B cell (primary cell): ENCODE measurements at regions of chr12 and their contacts with region 1.

Region 1: DNA sequence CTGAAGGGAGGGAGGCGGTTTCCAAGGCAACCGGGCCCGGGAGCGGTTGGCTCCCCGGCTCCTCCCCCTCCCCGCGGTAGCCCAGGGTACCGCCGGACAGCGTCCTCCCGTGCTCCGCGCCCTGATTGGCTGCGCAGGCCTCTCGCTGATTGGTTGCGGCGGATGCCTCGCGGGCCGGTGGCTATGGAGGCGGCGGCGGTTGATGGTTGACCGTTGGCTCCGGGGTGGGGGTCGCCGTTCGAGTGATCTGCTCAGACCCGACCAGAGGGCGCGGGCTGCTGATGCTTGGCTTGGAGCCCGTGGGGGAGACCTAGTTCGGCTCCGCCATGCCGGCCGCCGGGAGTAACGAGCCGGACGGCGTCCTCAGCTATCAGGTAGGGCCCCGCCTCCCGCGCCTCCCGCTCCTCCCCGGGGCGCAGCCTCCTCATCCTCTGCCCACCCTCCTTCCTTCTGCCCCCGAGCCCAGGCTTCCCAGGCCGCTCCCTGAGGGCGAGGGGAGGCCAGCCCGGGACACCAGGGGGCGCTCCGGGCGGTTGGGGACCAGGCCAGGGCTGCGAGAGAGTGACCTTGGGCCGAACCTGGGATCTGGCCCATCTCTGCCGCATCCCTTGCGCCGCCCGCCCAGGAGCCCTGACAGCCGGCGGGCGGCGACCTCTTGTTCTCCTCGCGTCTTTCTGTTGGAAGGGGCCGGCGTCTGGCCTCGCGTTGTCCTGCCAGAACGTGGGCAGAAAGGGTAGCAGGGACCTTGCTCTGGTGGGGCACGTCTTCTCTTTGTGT is at the start of gene SLC4A8:
- DNase-seq: peak; percentile 87
- ATAC-seq: peak; percentile 94
- H3K4me3 ChIP-seq: peak within 1 kb of the TSS in 4 of 5 experiments; percentile 62 to 76 (median 68)
- H3K4me3 Mint-ChIP-seq: peak within 1 kb of the TSS; percentile 68
- H3K27ac ChIP-seq: peak within 1 kb of the TSS in 1 of 2 donors; percentile 23
- H3K27ac Mint-ChIP-seq: peak within 1 kb of the TSS; percentile 50
- H3K4me1 ChIP-seq: peaks cover 15 to 19% of the 10 kb centered on the region in 2 donors
- H3K4me1 Mint-ChIP-seq: peaks cover 22% of the 10 kb centered on the region
- H3K27me3 ChIP-seq: no peaks in the 10 kb centered on the region
- H3K27me3 Mint-ChIP-seq: no peaks in the 10 kb centered on the region
- CTCF ChIP-seq: peak; percentile 86
- total RNA-seq, gene SLC4A8: 3.0 and 3.2 TPM in 2 replicates

Region 2: GRCh38 chr12:51217968-51218606 is 206.8 kb before region 1 on chr12 and contains the start of gene POU6F1:
- CTCF ChIA-PET with region 1: no interaction called
- POLR2A ChIA-PET with region 1: no interaction called
- intact Hi-C with region 1: no loop called
- DNase-seq: peak; percentile 87
- ATAC-seq: peak; percentile 72
- H3K4me3 ChIP-seq: peak within 1 kb of the TSS; percentile 68 to 86 (median 71)
- H3K4me3 Mint-ChIP-seq: peak within 1 kb of the TSS; percentile 95
- H3K27ac ChIP-seq: peak within 1 kb of the TSS; percentile 85 to 93
- H3K27ac Mint-ChIP-seq: peak within 1 kb of the TSS; percentile 96
- H3K4me1 ChIP-seq: peaks cover 6 to 18% of the 10 kb centered on the region in 2 donors
- H3K4me1 Mint-ChIP-seq: peaks cover 19% of the 10 kb centered on the region
- H3K27me3 ChIP-seq: no peaks in the 10 kb centered on the region
- H3K27me3 Mint-ChIP-seq: no peaks in the 10 kb centered on the region
- CTCF ChIP-seq: peak; percentile 69
- total RNA-seq, gene POU6F1: 57.5 and 62.6 TPM in 2 replicates

Region 3: GRCh38 chr12:51391283-51392162 is 33.3 kb before region 1 on chr12 and contains the start of gene GALNT6:
- CTCF ChIA-PET with region 1: interaction called, 5 read pairs
- POLR2A ChIA-PET with region 1: no interaction called
- intact Hi-C with region 1: loop called (anchors 1 kb)
- DNase-seq: peak; percentile 88
- ATAC-seq: peak; percentile 79
- H3K4me3 ChIP-seq: peak within 1 kb of the TSS; percentile 55 to 87 (median 83)
- H3K4me3 Mint-ChIP-seq: peak within 1 kb of the TSS; percentile 90
- H3K27ac ChIP-seq: peak within 1 kb of the TSS; percentile 68 to 87
- H3K27ac Mint-ChIP-seq: peak within 1 kb of the TSS; percentile 88
- H3K4me1 ChIP-seq: peaks cover 68 to 79% of the 10 kb centered on the region in 2 donors
- H3K4me1 Mint-ChIP-seq: peaks cover 74% of the 10 kb centered on the region
- H3K27me3 ChIP-seq: no peaks in the 10 kb centered on the region
- H3K27me3 Mint-ChIP-seq: no peaks in the 10 kb centered on the region
- CTCF ChIP-seq: no peak
- total RNA-seq, gene GALNT6: 8.5 and 9.0 TPM in 2 replicates

Region 4: DNA sequence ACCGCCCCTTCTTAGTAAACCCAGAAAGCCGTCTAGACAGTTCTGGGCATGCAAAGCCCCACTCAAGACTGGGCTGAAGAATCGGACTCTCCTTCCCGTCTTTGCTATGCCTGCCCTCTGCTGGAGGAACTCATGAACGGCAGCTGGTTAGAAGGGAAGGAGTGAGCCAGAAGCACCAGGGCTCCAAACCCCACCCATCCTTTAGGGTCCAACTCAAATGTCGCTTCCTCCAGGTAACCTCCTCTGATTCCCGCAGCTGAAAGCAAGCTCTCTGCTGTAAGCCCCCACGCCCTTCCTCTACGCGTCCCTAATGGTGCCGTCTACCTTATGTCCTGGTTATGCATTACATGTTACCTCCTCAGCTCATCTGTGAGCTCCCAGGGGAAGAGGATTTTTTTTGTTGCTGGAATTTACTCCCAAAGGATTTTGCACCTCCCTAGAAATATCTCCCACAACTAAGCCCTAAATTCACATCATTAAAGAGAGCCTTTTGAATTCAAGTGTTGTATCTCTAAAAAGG is 107.2 kb after region 1 on chr12:
- CTCF ChIA-PET with region 1: interaction called, 83 read pairs
- POLR2A ChIA-PET with region 1: no interaction called
- intact Hi-C with region 1: no loop called
- DNase-seq: peak; percentile 84
- ATAC-seq: peak; percentile 98
- H3K4me3 ChIP-seq: no peak overlapping the region
- H3K4me3 Mint-ChIP-seq: no peak overlapping the region
- H3K27ac ChIP-seq: no peak overlapping the region
- H3K27ac Mint-ChIP-seq: no peak overlapping the region
- H3K4me1 ChIP-seq: peaks cover 7 to 8% of the 10 kb centered on the region in 2 donors
- H3K4me1 Mint-ChIP-seq: peaks cover 9% of the 10 kb centered on the region
- H3K27me3 ChIP-seq: peaks cover 0 to 13% (median 0%) of the 10 kb centered on the region in 4 experiments
- H3K27me3 Mint-ChIP-seq: peaks cover 30% of the 10 kb centered on the region
- CTCF ChIP-seq: peak; percentile 92

Region 5: GRCh38 chr12:51678086-51678724 is 253.4 kb after region 1 on chr12:
- CTCF ChIA-PET with region 1: interaction called, 5 read pairs
- POLR2A ChIA-PET with region 1: no interaction called
- intact Hi-C with region 1: loop called (anchors 2 kb)
- DNase-seq: peak; percentile 35
- ATAC-seq: peak; percentile 31
- H3K4me3 ChIP-seq: no peak overlapping the region
- H3K4me3 Mint-ChIP-seq: no peak overlapping the region
- H3K27ac ChIP-seq: no peak overlapping the region
- H3K27ac Mint-ChIP-seq: no peak overlapping the region
- H3K4me1 ChIP-seq: no peaks in the 10 kb centered on the region
- H3K4me1 Mint-ChIP-seq: no peaks in the 10 kb centered on the region
- H3K27me3 ChIP-seq: no peaks in the 10 kb centered on the region
- H3K27me3 Mint-ChIP-seq: peaks cover 20% of the 10 kb centered on the region
- CTCF ChIP-seq: peak; percentile 71

Region 6: GRCh38 chr12:51814311-51815088 is 389.6 kb after region 1 on chr12:
- CTCF ChIA-PET with region 1: interaction called, 9 read pairs
- POLR2A ChIA-PET with region 1: no interaction called
- intact Hi-C with region 1: loop called (anchors 2 kb)
- DNase-seq: peak; percentile 76
- ATAC-seq: peak; percentile 88
- H3K4me3 ChIP-seq: peak overlapping the region in 4 of 5 experiments; percentile 35 to 68 (median 52)
- H3K4me3 Mint-ChIP-seq: peak overlapping the region; percentile 80
- H3K27ac ChIP-seq: no peak overlapping the region
- H3K27ac Mint-ChIP-seq: no peak overlapping the region
- H3K4me1 ChIP-seq: peaks cover 6 to 9% of the 10 kb centered on the region in 2 donors
- H3K4me1 Mint-ChIP-seq: peaks cover 15% of the 10 kb centered on the region
- H3K27me3 ChIP-seq: peaks cover 0 to 49% (median 14%) of the 10 kb centered on the region in 4 experiments
- H3K27me3 Mint-ChIP-seq: peaks cover 61% of the 10 kb centered on the region
- CTCF ChIP-seq: peak; percentile 61

Region 7: GRCh38 chr12:51879102-51879501 is 454.3 kb after region 1 on chr12:
- CTCF ChIA-PET with region 1: interaction called, 7 read pairs
- POLR2A ChIA-PET with region 1: no interaction called
- intact Hi-C with region 1: loop called (anchors 5 kb)
- DNase-seq: no peak
- ATAC-seq: no peak
- H3K4me3 ChIP-seq: no peak overlapping the region
- H3K4me3 Mint-ChIP-seq: no peak overlapping the region
- H3K27ac ChIP-seq: no peak overlapping the region
- H3K27ac Mint-ChIP-seq: no peak overlapping the region
- H3K4me1 ChIP-seq: no peaks in the 10 kb centered on the region
- H3K4me1 Mint-ChIP-seq: no peaks in the 10 kb centered on the region
- H3K27me3 ChIP-seq: no peaks in the 10 kb centered on the region
- H3K27me3 Mint-ChIP-seq: peaks cover 12% of the 10 kb centered on the region
- CTCF ChIP-seq: no peak

Region 8: GRCh38 chr12:51980051-51980808 is 555.4 kb after region 1 on chr12:
- CTCF ChIA-PET with region 1: no interaction called
- POLR2A ChIA-PET with region 1: no interaction called
- intact Hi-C with region 1: loop called (anchors 1 kb)
- DNase-seq: peak; percentile 84
- ATAC-seq: peak; percentile 97
- H3K4me3 ChIP-seq: no peak overlapping the region
- H3K4me3 Mint-ChIP-seq: no peak overlapping the region
- H3K27ac ChIP-seq: no peak overlapping the region
- H3K27ac Mint-ChIP-seq: no peak overlapping the region
- H3K4me1 ChIP-seq: peaks cover 3 to 6% of the 10 kb centered on the region in 2 donors
- H3K4me1 Mint-ChIP-seq: peaks cover 10% of the 10 kb centered on the region
- H3K27me3 ChIP-seq: no peaks in the 10 kb centered on the region
- H3K27me3 Mint-ChIP-seq: no peaks in the 10 kb centered on the region
- CTCF ChIP-seq: peak; percentile 94